ENCODE measurements at regions of chr2 and their contacts with region 1.

Region 1: DNA sequence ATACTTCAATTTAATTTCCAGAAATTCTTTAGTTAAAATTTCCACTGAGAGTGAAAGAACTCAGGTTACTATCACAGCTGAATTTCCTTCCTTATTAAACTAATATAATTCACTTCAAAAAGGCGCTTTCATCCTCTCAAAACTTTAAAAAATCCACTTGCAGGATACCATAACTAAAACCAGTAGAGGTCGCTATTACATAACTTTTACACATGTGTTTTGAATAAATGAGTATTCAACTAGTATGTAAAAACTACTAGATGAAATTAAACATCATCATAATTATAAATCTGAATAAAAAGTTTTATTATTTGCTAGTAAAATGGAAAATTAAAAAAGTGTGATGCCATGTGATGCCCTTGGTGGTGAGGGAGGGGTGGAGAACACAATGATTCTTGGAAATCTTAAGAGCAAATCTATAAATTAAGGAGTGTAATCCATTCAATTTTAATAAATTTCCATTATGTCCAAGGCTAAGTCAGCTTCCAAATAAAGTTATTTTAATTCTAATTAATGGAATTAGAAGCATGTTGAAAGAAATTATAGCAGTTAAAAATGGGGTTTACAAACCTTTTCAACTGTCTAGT is 61.4 kb downstream of the SOS1 start:
- DNase-seq: peak; percentile 20
- ATAC-seq: no peak
- H3K4me3 ChIP-seq: no peak overlapping the region
- H3K27ac ChIP-seq: no peak overlapping the region
- H3K4me1 ChIP-seq: no peaks in the 10 kb centered on the region
- H3K27me3 ChIP-seq: no peaks in the 10 kb centered on the region
- CTCF ChIP-seq: peak; percentile 66; the same call in 1 of the 2 replicates

Region 2: DNA sequence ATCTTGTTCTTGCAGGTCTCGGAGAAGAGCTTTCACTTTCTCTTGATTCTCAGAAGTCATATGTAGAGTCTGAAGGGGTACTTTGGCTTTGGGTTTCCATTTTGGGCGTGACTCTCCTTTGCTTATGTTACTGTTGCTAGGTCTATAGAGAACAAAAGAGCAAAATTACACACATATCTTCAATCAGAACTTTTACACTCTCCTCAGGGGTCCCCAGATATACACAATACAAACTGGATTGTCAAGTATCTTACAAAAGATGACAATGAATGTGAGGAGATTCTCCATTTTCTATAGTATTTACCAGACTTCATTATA is 196.1 kb before region 1 on chr2:
- CTCF ChIA-PET with region 1: no interaction called
- POLR2A ChIA-PET with region 1: no interaction called
- in situ Hi-C with region 1: no loop called
- intact Hi-C with region 1: no loop called
- DNase-seq: no peak
- ATAC-seq: no peak
- H3K4me3 ChIP-seq: no peak overlapping the region
- H3K27ac ChIP-seq: no peak overlapping the region
- H3K4me1 ChIP-seq: no peaks in the 10 kb centered on the region
- H3K27me3 ChIP-seq: no peaks in the 10 kb centered on the region
- CTCF ChIP-seq: no peak

Region 3: DNA sequence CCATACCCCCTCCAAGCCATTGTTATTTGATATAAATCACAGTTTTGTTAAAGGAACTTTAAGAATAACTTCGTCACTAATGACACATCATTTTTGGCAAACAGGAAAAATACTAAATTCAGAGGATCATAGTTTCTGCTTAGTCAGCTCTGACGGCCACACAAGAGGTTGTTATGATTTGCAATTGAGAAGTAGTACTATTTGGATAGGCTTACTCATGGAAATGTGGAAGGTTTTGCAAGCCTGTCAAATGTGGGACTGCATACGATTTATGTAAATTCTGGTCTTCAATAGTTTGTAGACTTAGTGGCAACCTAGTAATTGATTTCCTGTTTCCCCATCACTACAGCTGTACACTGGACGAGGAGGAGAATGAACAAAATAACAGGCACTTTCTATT is 61.7 kb before region 1 on chr2:
- CTCF ChIA-PET with region 1: no interaction called
- POLR2A ChIA-PET with region 1: no interaction called
- in situ Hi-C with region 1: no loop called
- intact Hi-C with region 1: no loop called
- DNase-seq: no peak
- ATAC-seq: no peak
- H3K4me3 ChIP-seq: no peak overlapping the region
- H3K27ac ChIP-seq: no peak overlapping the region
- H3K4me1 ChIP-seq: no peaks in the 10 kb centered on the region
- H3K27me3 ChIP-seq: no peaks in the 10 kb centered on the region
- CTCF ChIP-seq: no peak

Region 4: DNA sequence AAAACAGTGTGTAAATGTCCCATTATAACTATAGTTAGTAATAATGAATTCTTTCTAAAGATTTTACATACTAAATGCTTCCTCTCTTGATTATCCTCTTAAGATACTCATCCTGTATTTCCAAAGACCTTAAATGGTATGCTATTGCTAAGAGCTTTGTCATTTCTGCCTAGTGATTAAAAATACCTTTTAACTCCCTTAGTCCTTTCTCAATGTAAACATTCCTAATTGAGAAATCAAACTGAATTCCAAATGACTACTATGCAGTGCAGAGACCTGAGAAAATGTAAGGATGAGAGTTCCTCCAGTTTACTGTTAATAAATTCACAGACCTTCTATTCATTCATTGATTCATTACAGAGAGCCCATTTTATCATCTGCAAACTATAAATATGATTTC is 25.5 kb before region 1 on chr2:
- CTCF ChIA-PET with region 1: interaction called, 15 read pairs
- POLR2A ChIA-PET with region 1: no interaction called
- in situ Hi-C with region 1: no loop called
- intact Hi-C with region 1: no loop called
- DNase-seq: no peak
- ATAC-seq: no peak
- H3K4me3 ChIP-seq: no peak overlapping the region
- H3K27ac ChIP-seq: no peak overlapping the region
- H3K4me1 ChIP-seq: no peaks in the 10 kb centered on the region
- H3K27me3 ChIP-seq: no peaks in the 10 kb centered on the region
- CTCF ChIP-seq: no peak

Region 5: GRCh38 chr2:39124000-39124745 is 64.7 kb after region 1 on chr2:
- CTCF ChIA-PET with region 1: interaction called, 3 read pairs
- POLR2A ChIA-PET with region 1: no interaction called
- in situ Hi-C with region 1: no loop called
- intact Hi-C with region 1: loop called (anchors 5 kb)
- DNase-seq: peak; percentile 82
- ATAC-seq: peak; percentile 89
- H3K4me3 ChIP-seq: peak overlapping the region; percentile 61 to 73
- H3K27ac ChIP-seq: peak overlapping the region; percentile 98
- H3K4me1 ChIP-seq: peaks cover 16% of the 10 kb centered on the region
- H3K27me3 ChIP-seq: no peaks in the 10 kb centered on the region
- CTCF ChIP-seq: peak; percentile 84

Region 6: DNA sequence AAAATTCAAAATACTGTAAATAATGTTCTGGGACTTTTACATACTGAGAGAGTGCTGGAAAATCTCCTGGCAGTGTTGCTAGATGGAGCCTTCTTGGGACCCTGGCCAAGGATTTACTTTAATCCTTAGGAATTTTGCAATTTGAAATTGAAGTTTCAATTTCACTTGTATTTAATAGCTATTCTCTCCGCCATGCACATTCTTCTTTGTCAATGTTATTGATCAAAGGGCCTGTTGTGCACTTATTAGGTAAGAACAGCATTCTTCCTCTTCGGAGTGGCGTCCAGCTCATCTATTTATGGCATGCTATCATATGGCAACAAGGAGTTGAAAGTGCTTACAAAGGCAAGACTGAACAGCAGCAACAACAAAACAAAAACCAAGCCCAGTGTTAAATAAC is 101.5 kb after region 1 on chr2:
- CTCF ChIA-PET with region 1: no interaction called
- POLR2A ChIA-PET with region 1: no interaction called
- in situ Hi-C with region 1: no loop called
- intact Hi-C with region 1: no loop called
- DNase-seq: no peak
- ATAC-seq: no peak
- H3K4me3 ChIP-seq: no peak overlapping the region
- H3K27ac ChIP-seq: no peak overlapping the region
- H3K4me1 ChIP-seq: no peaks in the 10 kb centered on the region
- H3K27me3 ChIP-seq: no peaks in the 10 kb centered on the region
- CTCF ChIP-seq: no peak

Measured in Panc1 (cell line).